ENCODE measurements at regions of chr3 and their contacts with region 1.

Region 1: DNA sequence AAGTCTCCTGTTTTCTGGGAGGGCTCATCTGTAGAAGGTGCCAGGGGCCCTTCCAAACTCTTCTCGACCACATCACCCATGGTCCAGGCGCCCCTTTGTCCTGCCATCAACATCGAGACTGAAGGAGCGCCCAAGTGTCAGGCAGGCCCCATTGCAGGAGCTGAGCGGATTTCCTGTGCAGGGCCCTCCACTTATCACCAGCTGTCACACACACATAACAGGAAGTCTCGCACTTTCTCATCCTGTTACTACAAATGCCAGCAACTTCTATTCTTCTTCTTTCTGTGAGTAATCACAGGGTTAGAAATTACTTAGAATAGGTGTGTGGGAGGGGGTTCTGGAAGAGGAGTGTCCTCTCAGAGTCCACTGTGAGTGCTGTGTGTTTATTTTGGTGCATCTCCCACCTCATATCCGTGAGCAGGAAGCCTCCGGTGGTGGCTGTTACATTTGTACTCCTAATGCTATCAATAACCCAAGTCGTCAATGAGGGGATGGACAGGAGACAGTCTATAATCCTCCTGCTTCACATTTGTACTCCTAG is at the start of gene KLHL6:
- DNase-seq: peak; percentile 25 to 58
- ATAC-seq: peak; percentile 83 to 93 (median 87)
- H3K4me3 ChIP-seq: peak within 1 kb of the TSS in 9 of 10 donors; percentile 3 to 61 (median 23)
- H3K27ac ChIP-seq: peak within 1 kb of the TSS in 9 of 10 donors; percentile 36 to 91 (median 72)
- H3K4me1 ChIP-seq: peaks cover 0 to 47% (median 23%) of the 10 kb centered on the region in 9 donors
- H3K27me3 ChIP-seq: no peaks in the 10 kb centered on the region
- CTCF ChIP-seq: no peak
- total RNA-seq, gene KLHL6: 0.47 to 5.1 (median 0.93) TPM

Region 2: DNA sequence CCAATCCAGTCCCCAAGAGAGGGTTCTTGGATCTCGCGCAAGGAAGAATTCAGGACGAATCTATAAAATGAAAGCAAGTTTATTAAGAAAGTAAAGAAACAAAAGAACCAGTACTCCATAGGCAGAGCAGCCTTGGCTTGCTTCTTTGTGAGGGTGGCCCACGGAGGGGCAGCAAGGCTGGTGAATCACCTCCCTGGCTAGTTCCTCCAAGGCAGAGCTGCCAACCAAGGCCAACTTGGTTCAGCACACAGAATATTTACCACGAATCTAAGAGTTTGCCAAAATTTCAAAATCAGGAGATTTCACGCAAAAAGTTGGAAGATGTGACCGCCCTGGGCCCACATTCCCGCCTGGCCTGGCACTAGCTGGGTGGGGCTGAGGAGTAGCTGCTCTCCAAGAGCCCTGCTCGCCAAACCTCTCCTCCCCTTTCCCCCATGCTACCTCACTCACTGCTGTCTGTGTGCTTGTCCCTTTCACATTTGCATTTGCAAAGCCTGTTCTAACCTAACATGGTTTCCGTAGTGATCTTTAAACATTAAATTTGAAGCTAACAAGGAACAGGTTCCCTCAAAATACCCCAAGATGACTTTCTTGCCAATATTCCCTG is 549.1 kb before region 1 on chr3:
- intact Hi-C with region 1: no loop called
- DNase-seq: no peak
- ATAC-seq: no peak
- H3K4me3 ChIP-seq: no peak overlapping the region
- H3K27ac ChIP-seq: no peak overlapping the region
- H3K4me1 ChIP-seq: no peaks in the 10 kb centered on the region
- H3K27me3 ChIP-seq: no peaks in the 10 kb centered on the region
- CTCF ChIP-seq: no peak

Region 3: GRCh38 chr3:183317886-183318865 is 237.4 kb before region 1 on chr3:
- intact Hi-C with region 1: no loop called
- DNase-seq: no peak
- ATAC-seq: no peak
- H3K4me3 ChIP-seq: no peak overlapping the region
- H3K27ac ChIP-seq: no peak overlapping the region
- H3K4me1 ChIP-seq: peaks cover 0 to 16% (median 0%) of the 10 kb centered on the region in 9 donors
- H3K27me3 ChIP-seq: no peaks in the 10 kb centered on the region
- CTCF ChIP-seq: no peak

Region 4: GRCh38 chr3:183468424-183468823 is 87.2 kb before region 1 on chr3:
- intact Hi-C with region 1: loop called in 4 of 10 experiments (anchors 5 to 10 kb)
- DNase-seq: no peak
- ATAC-seq: peak in 1 of 8 donors; percentile 45
- H3K4me3 ChIP-seq: no peak overlapping the region
- H3K27ac ChIP-seq: no peak overlapping the region
- H3K4me1 ChIP-seq: peaks cover 0 to 15% (median 3%) of the 10 kb centered on the region in 9 donors
- H3K27me3 ChIP-seq: no peaks in the 10 kb centered on the region
- CTCF ChIP-seq: no peak

Region 5: GRCh38 chr3:183477801-183478456 is 77.7 kb before region 1 on chr3:
- intact Hi-C with region 1: loop called in 3 of 10 experiments (anchors 10 kb)
- DNase-seq: no peak
- ATAC-seq: peak in 1 of 8 donors; percentile 12
- H3K4me3 ChIP-seq: no peak overlapping the region
- H3K27ac ChIP-seq: no peak overlapping the region
- H3K4me1 ChIP-seq: peaks cover 0 to 33% (median 9%) of the 10 kb centered on the region in 9 donors
- H3K27me3 ChIP-seq: no peaks in the 10 kb centered on the region
- CTCF ChIP-seq: no peak

Region 6: DNA sequence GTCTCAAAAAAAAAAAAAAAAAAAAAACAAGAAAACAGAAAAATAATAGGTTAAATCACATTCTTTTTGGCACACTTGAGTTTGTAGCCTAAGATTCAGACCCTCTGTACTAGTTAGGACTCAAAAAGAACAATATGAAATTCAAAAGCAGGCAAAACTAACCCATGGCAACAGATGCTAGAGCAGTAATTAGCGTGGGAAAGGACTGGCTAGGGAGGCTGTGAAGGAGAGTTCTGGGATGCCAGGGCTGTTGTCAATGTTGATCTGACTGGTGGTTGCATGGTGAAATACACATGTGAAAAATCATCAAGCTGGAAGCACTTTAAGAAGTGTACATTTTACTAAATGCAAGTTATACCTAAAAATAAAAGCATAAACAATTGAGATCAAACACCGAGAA is 35.7 kb before region 1 on chr3:
- intact Hi-C with region 1: loop called in 1 of 10 experiments (anchors 5 kb)
- DNase-seq: no peak
- ATAC-seq: no peak
- H3K4me3 ChIP-seq: no peak overlapping the region
- H3K27ac ChIP-seq: no peak overlapping the region
- H3K4me1 ChIP-seq: peaks cover 0 to 26% (median 0%) of the 10 kb centered on the region in 9 donors
- H3K27me3 ChIP-seq: no peaks in the 10 kb centered on the region
- CTCF ChIP-seq: no peak